Activated naive CD4-positive, alpha-beta T cell treated with anti-CD3 and anti-CD28 coated beads, Interleukin-2, amount 10 ng/mL, durations not matched to agents 7 days and 5 days (primary cell): ENCODE measurements at regions of chr17 and their contacts with region 1.

Region 1: GRCh38 chr17:50269477-50270434 is 4.5 kb upstream of the TMEM92 start:
- DNase-seq: peak; percentile 81
- H3K4me3 Mint-ChIP-seq: no peak overlapping the region
- H3K27ac Mint-ChIP-seq: no peak overlapping the region
- H3K4me1 Mint-ChIP-seq: peaks cover 14% of the 10 kb centered on the region
- H3K27me3 Mint-ChIP-seq: peaks cover 63% of the 10 kb centered on the region

Region 2: DNA sequence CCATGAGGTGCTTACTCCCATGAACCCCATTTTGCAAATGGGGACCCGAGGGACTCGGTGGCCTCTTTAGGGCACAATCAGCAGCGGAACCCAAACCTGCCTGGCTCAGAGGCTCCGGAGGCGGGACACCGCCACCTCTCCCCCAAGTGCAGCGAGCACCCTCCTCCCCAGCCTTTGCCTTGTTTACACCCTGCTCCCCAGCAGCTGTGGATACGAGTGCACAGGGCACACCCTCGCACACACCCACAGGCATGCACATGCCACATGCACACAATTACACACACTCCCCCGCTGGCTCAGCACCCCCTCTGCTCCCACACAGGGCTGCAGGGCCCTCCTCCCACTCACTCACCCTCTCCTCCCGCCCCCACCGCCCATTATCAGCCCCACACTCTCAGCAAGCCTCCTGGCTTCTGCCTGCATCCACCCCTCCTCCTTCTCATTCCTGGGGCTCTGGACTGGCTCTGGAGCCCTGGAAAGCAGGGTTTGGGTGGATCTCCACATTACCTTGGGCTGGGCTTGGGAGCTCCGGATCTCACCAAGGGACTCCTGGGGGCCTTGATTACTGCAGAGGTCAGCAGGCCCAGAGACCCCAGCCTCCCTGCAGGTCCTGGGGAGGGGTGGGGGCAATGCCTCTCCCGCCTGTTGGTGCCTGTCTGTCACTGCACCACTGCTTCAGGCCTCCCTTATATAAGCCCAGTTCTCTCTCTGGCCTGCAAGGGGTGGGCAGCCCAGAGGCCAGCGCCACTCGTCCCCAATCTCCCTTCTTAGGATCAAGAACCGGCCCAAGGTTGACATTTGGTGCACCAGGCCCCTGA is 168.2 kb before region 1 on chr17:
- CTCF ChIA-PET with region 1: no interaction called
- DNase-seq: no peak
- H3K4me3 Mint-ChIP-seq: no peak overlapping the region
- H3K27ac Mint-ChIP-seq: no peak overlapping the region
- H3K4me1 Mint-ChIP-seq: peaks cover 8% of the 10 kb centered on the region
- H3K27me3 Mint-ChIP-seq: no peaks in the 10 kb centered on the region

Region 3: GRCh38 chr17:50169121-50169764 is 100.5 kb before region 1 on chr17:
- CTCF ChIA-PET with region 1: interaction called, 14 read pairs
- DNase-seq: peak; percentile 68
- H3K4me3 Mint-ChIP-seq: peak overlapping the region; percentile 17
- H3K27ac Mint-ChIP-seq: peak overlapping the region; percentile 6
- H3K4me1 Mint-ChIP-seq: peaks cover 16% of the 10 kb centered on the region
- H3K27me3 Mint-ChIP-seq: peaks cover 49% of the 10 kb centered on the region

Region 4: DNA sequence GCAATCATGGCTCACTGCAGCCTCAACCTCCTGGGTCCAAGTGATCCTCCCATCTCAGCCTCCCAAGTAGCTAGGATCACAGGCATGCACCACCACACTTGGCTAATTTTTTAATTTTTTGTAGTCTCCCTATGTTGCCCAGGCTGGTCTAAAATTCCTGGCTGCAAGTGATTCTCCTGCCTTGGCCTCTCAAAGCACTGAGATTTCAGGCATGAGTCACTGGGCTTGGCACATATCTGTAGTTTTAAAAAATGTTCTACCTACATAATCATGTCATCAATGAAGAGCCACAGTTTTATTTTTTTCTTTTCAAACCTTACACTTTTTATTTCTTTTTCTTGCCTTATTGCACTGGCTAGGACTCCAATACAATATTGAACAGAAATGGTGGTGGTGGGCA is 35.2 kb before region 1 on chr17:
- CTCF ChIA-PET with region 1: no interaction called
- DNase-seq: no peak
- H3K4me3 Mint-ChIP-seq: no peak overlapping the region
- H3K27ac Mint-ChIP-seq: no peak overlapping the region
- H3K4me1 Mint-ChIP-seq: no peaks in the 10 kb centered on the region
- H3K27me3 Mint-ChIP-seq: peaks cover 40% of the 10 kb centered on the region

Region 5: GRCh38 chr17:50283246-50283645 is 13.5 kb after region 1 on chr17:
- CTCF ChIA-PET with region 1: interaction called, 11 read pairs
- DNase-seq: peak; percentile 39
- H3K4me3 Mint-ChIP-seq: no peak overlapping the region
- H3K27ac Mint-ChIP-seq: no peak overlapping the region
- H3K4me1 Mint-ChIP-seq: peaks cover 6% of the 10 kb centered on the region
- H3K27me3 Mint-ChIP-seq: peaks cover 62% of the 10 kb centered on the region

Region 6: DNA sequence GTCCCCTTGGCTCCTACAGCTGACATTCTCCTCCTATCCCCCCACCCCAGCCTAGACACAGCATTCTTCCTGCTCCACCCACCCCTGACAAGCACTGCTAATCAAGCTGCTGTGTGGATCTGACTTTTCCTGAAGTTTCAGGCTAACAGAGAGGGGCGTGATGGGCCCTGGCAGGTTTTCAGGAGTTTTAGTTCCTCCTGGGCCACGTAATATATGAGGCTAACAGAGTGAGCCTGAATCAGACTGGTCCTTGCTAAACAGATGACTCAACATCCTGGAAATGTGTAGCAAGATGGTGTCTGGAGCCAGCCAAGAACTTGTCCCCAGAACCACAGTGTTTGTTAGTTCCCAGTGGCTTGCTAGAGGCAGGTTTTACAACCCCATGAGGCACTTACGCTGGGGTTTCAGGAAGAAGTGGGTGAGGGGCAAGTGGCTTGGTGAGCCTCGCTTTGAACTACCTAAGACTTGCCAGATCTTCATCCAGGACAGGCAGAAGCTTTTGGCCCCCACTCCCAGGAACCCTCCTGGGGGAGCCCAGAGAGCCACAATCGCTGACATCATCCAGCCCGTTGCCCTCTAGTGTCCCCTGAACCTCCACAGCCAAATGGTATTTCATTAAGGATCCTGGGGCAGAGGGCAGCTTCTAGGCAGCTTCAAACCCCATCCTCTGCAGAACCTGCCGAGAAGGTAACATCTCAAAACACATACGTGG is 20.4 kb after region 1 on chr17:
- CTCF ChIA-PET with region 1: interaction called, 48 read pairs
- DNase-seq: no peak
- H3K4me3 Mint-ChIP-seq: no peak overlapping the region
- H3K27ac Mint-ChIP-seq: no peak overlapping the region
- H3K4me1 Mint-ChIP-seq: peaks cover 15% of the 10 kb centered on the region
- H3K27me3 Mint-ChIP-seq: peaks cover 35% of the 10 kb centered on the region

Region 7: GRCh38 chr17:50440172-50440837 is 170.5 kb after region 1 on chr17:
- CTCF ChIA-PET with region 1: no interaction called
- DNase-seq: no peak
- H3K4me3 Mint-ChIP-seq: no peak overlapping the region
- H3K27ac Mint-ChIP-seq: no peak overlapping the region
- H3K4me1 Mint-ChIP-seq: no peaks in the 10 kb centered on the region
- H3K27me3 Mint-ChIP-seq: no peaks in the 10 kb centered on the region